H1 (cell line): ENCODE measurements at regions of chr11 and their contacts with region 1.

Region 1: DNA sequence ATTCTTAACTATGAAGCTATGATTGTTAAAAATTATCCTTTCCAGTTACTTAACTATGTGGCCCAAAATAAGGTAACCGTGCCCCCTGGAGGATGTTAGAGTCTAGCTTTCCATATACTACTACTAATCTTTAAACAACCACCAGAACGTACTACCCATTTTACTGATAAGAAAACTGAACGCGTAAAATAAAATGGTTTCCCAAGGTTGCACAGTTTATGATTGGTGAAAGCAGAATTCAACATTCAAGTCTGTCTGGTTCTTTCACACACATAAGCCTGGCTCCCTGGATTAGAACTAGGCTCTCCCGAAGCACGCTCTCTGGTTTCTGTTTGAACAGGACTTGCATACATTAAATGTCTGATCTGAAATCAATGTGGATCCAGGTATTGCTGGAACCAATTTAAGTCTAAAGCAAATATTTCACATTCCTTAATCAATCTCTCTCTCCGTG is 437.9 kb upstream of the CCDC90B start:
- DNase-seq: no peak
- H3K4me3 ChIP-seq: peak overlapping the region in 3 of 4 experiments; percentile 3 to 51 (median 32); a peak in 4 of 8 replicates
- H3K27ac ChIP-seq: peak overlapping the region; percentile 57; the same call in 1 of the 2 replicates
- H3K4me1 ChIP-seq: peaks cover 8 to 22% (median 16%) of the 10 kb centered on the region in 4 experiments; a peak in 6 of 7 replicates
- H3K27me3 ChIP-seq: no peaks in the 10 kb centered on the region; a peak in 1 of 7 replicates
- CTCF ChIP-seq: peak in 2 of 3 experiments; percentile 10 to 34; a peak in 2 of 4 replicates
- EP300 ChIP-seq: no peak
- POLR2A ChIP-seq: no peak
- RAD21 ChIP-seq: peak; percentile 51

Region 2: GRCh38 chr11:83292709-83293456 is 431.2 kb before region 1 on chr11:
- CTCF ChIA-PET with region 1: interaction called, 13 read pairs
- POLR2A ChIA-PET with region 1: no interaction called
- DNase-seq: peak in 1 of 2 experiments; percentile 31
- H3K4me3 ChIP-seq: no peak overlapping the region
- H3K27ac ChIP-seq: no peak overlapping the region
- H3K4me1 ChIP-seq: peaks cover 0 to 5% (median 2%) of the 10 kb centered on the region in 4 experiments; a peak in 2 of 7 replicates
- H3K27me3 ChIP-seq: no peaks in the 10 kb centered on the region
- CTCF ChIP-seq: peak in 2 of 3 experiments; percentile 60 to 83; a peak in 3 of 4 replicates
- EP300 ChIP-seq: no peak
- POLR2A ChIP-seq: no peak
- RAD21 ChIP-seq: peak; percentile 75 to 78

Region 3: DNA sequence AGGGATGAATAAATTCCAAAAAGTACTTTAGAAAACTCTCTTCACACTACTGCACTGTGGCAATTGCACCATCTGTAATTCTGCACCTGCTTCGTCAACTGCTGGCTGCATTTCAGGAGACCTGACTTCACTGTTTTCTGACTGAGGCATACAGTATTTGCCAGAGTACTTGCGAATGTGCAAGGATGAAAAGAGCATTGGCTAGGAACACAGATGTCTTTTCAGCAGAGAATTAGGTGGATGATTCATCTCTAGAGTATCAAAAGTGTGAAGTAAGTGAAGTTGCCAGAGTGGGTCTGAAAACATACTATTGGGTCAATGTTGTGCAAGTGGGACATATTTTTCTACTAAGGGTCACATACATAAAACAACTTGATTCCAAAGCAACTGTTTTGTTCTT is 10.3 kb before region 1 on chr11:
- CTCF ChIA-PET with region 1: interaction called, 20 read pairs
- POLR2A ChIA-PET with region 1: interaction called, 3 read pairs
- DNase-seq: no peak
- H3K4me3 ChIP-seq: no peak overlapping the region
- H3K27ac ChIP-seq: no peak overlapping the region
- H3K4me1 ChIP-seq: peaks cover 0 to 5% (median 0%) of the 10 kb centered on the region in 4 experiments; a peak in 1 of 7 replicates
- H3K27me3 ChIP-seq: no peaks in the 10 kb centered on the region
- CTCF ChIP-seq: no peak
- EP300 ChIP-seq: no peak
- POLR2A ChIP-seq: no peak
- RAD21 ChIP-seq: no peak

Region 4: GRCh38 chr11:83744620-83745192 is 20.7 kb after region 1 on chr11:
- CTCF ChIA-PET with region 1: no interaction called
- POLR2A ChIA-PET with region 1: no interaction called
- DNase-seq: no peak
- H3K4me3 ChIP-seq: no peak overlapping the region
- H3K27ac ChIP-seq: no peak overlapping the region
- H3K4me1 ChIP-seq: no peaks in the 10 kb centered on the region
- H3K27me3 ChIP-seq: no peaks in the 10 kb centered on the region
- CTCF ChIP-seq: no peak
- EP300 ChIP-seq: no peak
- POLR2A ChIP-seq: no peak
- RAD21 ChIP-seq: no peak